ENCODE measurements at regions of chr3 and their contacts with region 1.

Region 1: DNA sequence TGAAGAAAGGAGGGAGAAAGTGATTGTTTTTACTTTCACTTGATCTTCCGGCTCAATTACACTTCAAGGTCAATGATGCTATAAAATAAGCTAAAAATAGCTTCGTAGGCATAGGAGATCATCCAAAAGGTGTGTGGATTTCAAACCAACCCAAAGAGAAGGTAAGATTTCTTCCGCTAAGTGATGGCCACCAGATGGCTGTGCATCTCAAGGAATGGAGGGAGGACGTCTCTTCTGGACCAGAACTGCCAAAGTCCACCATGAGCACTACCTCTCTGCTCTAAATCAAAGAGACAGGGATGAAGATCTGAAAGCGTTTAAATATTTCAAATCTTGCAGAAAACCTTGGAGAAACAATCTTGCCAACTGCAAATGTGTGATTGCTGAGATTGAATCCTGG is 199.1 kb upstream of the ZPLD1 start:
- DNase-seq: peak in 1 of 2 experiments; percentile 8
- H3K4me3 ChIP-seq: no peak overlapping the region
- H3K4me3 Mint-ChIP-seq: no peak overlapping the region
- H3K27ac Mint-ChIP-seq: no peak overlapping the region
- H3K4me1 ChIP-seq: no peaks in the 10 kb centered on the region
- H3K4me1 Mint-ChIP-seq: no peaks in the 10 kb centered on the region
- H3K27me3 ChIP-seq: no peaks in the 10 kb centered on the region
- H3K27me3 Mint-ChIP-seq: peaks cover 10% of the 10 kb centered on the region
- CTCF ChIP-seq: peak in 1 of 2 experiments; percentile 19

Region 2: DNA sequence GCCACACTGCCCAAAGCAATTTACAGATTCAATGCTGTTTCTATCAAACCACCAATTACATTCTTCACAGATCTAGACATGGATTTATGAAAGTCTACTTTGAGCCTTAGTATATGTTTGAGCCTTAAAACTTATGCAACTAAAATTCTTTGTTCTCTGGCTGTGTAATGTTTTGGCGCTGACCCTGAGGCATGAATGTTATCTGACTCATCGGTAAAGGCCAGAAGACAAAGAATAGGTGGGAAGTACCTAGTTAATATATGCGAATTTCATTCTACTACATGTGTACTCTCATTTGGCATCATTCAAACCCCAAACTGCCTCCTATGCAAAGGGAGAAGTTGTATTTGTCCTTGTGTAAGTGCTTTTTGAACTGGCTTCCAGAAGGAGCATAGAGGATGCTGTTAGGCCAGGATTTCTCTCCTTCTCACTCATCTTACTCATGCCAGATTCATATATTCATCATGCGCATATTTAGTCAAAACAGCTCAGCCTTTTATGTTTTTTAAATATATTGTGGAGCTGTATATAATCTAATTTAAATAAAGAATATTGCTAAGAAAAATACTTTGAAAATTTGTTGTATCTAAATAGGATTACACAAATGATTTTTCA is 182.2 kb before region 1 on chr3:
- CTCF ChIA-PET with region 1: no interaction called
- POLR2A ChIA-PET with region 1: no interaction called
- intact Hi-C with region 1: no loop called
- DNase-seq: no peak
- H3K4me3 ChIP-seq: no peak overlapping the region
- H3K4me3 Mint-ChIP-seq: no peak overlapping the region
- H3K27ac Mint-ChIP-seq: no peak overlapping the region
- H3K4me1 ChIP-seq: no peaks in the 10 kb centered on the region
- H3K4me1 Mint-ChIP-seq: no peaks in the 10 kb centered on the region
- H3K27me3 ChIP-seq: no peaks in the 10 kb centered on the region
- H3K27me3 Mint-ChIP-seq: no peaks in the 10 kb centered on the region
- CTCF ChIP-seq: no peak

Region 3: GRCh38 chr3:102258666-102259227 is 23.1 kb after region 1 on chr3:
- CTCF ChIA-PET with region 1: no interaction called
- POLR2A ChIA-PET with region 1: no interaction called
- intact Hi-C with region 1: no loop called
- DNase-seq: no peak
- H3K4me3 ChIP-seq: no peak overlapping the region
- H3K4me3 Mint-ChIP-seq: no peak overlapping the region
- H3K27ac Mint-ChIP-seq: no peak overlapping the region
- H3K4me1 ChIP-seq: no peaks in the 10 kb centered on the region
- H3K4me1 Mint-ChIP-seq: no peaks in the 10 kb centered on the region
- H3K27me3 ChIP-seq: no peaks in the 10 kb centered on the region
- H3K27me3 Mint-ChIP-seq: peaks cover 6% of the 10 kb centered on the region
- CTCF ChIP-seq: no peak

Region 4: DNA sequence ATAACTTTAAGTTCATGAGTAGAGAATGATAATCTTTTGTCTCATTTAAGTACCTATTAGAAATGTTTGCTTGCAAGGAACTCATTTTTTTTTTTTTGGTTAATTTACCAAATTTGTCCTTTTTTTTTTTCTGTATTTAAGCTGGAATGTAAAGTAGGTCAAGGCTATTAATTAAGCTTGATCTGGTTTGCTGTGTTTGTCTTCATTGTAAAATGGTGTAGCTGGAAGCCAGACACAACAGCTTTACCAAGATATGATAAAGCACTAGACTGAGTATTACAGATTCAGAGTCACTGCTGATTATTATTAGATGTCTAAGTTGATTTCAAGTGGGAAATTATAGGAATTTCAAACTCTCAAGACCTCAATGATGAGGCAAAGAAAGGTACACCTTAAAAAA is 184.1 kb after region 1 on chr3:
- CTCF ChIA-PET with region 1: no interaction called
- POLR2A ChIA-PET with region 1: no interaction called
- intact Hi-C with region 1: loop called (anchors 10 kb)
- DNase-seq: no peak
- H3K4me3 ChIP-seq: no peak overlapping the region
- H3K4me3 Mint-ChIP-seq: no peak overlapping the region
- H3K27ac Mint-ChIP-seq: no peak overlapping the region
- H3K4me1 ChIP-seq: no peaks in the 10 kb centered on the region
- H3K4me1 Mint-ChIP-seq: no peaks in the 10 kb centered on the region
- H3K27me3 ChIP-seq: no peaks in the 10 kb centered on the region
- H3K27me3 Mint-ChIP-seq: peaks cover 4% of the 10 kb centered on the region
- CTCF ChIP-seq: no peak

Measured in Caco-2 (cell line).